Left ventricle myocardium inferior (tissue), 1 donor: ENCODE measurements at regions of chr11 and their contacts with region 1.

Region 1: DNA sequence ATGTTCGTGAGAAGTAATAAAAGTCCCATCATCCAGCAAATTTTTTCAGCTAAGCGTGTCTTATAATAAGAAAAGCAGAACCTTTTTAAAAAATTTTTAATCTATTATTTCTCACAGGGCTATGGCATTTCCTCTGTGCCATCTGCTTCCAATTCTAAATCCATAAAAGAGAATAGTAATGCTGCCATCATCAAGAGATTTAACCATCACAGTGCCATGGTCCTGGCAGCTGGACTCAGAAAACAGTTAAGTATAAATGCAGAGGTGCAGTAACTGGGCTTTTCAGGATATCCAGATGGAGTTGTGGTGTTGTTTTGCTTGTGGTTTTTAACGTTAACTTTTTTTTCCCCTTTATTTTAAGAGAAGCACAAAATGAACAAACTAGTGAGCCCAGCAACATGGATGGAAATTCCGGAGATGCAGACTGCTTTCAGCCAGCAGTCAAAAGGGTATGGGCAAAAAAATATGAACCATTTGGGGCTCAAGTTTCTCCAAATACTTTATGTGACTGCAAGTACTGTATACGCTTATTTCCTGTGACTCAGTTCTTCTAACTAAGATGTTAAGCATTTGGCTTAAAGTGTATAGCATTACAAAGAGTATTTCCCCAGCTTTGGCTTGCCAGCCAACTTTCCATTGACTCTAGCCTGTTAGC is 25.2 kb downstream of the GTF2H1 start:
- DNase-seq: no peak
- H3K4me3 ChIP-seq: no peak overlapping the region
- H3K27ac ChIP-seq: no peak overlapping the region
- H3K4me1 ChIP-seq: no peaks in the 10 kb centered on the region
- H3K27me3 ChIP-seq: no peaks in the 10 kb centered on the region
- CTCF ChIP-seq: no peak

Region 2: DNA sequence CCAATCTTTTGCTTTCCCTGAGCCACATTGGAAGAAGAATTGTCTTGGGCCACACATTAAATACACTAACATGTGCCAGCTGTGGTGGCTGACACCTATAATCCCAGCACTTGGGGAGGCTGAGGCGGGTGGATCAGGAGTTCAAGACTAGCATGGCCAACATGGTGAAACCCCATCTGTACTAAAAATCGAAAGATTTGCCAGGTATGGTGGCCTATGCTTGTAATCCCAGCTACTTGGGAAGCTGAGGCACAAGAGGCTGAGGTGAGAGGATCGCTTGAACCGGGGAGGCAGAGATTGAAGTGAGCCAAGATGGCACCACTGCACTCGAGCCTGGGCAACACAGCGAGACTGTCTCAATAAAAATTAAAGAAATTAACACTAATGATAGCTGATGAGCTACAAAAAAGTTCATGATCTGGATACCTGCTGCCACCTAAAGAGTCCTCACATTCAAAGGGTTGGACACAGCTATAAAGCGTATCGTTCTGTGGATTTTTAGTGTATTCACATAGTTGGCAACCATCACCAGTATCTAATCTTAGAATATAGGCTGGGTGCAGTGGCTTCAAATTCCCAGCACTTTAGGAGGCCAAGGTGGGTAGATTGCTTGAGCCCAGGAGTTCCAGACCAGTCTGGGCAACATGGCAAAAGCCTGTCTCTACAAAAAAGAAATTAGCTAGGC is 61.1 kb after region 1 on chr11:
- intact Hi-C with region 1: loop called (anchors 10 kb)
- DNase-seq: no peak
- H3K4me3 ChIP-seq: no peak overlapping the region
- H3K27ac ChIP-seq: no peak overlapping the region
- H3K4me1 ChIP-seq: peaks cover 4% of the 10 kb centered on the region
- H3K27me3 ChIP-seq: no peaks in the 10 kb centered on the region
- CTCF ChIP-seq: no peak

Region 3: GRCh38 chr11:18710545-18710944 is 362.9 kb after region 1 on chr11:
- intact Hi-C with region 1: no loop called
- DNase-seq: no peak
- H3K4me3 ChIP-seq: no peak overlapping the region
- H3K27ac ChIP-seq: no peak overlapping the region
- H3K4me1 ChIP-seq: peaks cover 9% of the 10 kb centered on the region
- H3K27me3 ChIP-seq: no peaks in the 10 kb centered on the region
- CTCF ChIP-seq: no peak